ENCODE measurements at regions of chr22 and their contacts with region 1.

Region 1: DNA sequence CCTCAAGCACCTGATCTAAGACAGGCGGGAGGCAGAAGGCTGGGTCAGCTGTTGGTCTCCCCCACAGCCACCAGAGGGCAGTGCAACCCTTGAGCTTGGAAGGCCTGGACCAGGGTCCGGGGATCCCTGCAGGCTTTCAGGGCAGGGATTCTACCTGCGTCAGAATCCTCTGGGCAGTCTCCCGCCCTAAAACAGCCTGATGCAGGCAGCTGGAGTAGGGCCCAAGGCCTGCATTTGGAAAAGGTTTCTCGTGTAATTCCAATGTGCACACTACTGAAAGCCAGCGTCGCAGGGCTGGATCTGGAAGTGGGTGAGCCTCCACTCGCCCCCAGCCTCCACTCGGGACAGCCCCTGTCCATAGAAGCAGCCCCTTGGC is 31.8 kb downstream of the BID start:
- DNase-seq: peak; percentile 57 to 91 (median 77)
- H3K4me3 ChIP-seq: peak overlapping the region in 5 of 59 donors; percentile 1 to 43 (median 20)
- H3K27ac ChIP-seq: peak overlapping the region in 21 of 59 donors; percentile 25 to 79 (median 54)
- H3K27me3 ChIP-seq: no peaks in the 10 kb centered on the region
- CTCF ChIP-seq: peak; percentile 38 to 85 (median 76)

Region 2: GRCh38 chr22:17319546-17319945 is 423.0 kb before region 1 on chr22:
- intact Hi-C with region 1: no loop called
- DNase-seq: no peak
- H3K4me3 ChIP-seq: no peak overlapping the region
- H3K27ac ChIP-seq: no peak overlapping the region
- H3K27me3 ChIP-seq: peaks cover 0 to 10% (median 0%) of the 10 kb centered on the region in 45 donors
- CTCF ChIP-seq: no peak

Region 3: DNA sequence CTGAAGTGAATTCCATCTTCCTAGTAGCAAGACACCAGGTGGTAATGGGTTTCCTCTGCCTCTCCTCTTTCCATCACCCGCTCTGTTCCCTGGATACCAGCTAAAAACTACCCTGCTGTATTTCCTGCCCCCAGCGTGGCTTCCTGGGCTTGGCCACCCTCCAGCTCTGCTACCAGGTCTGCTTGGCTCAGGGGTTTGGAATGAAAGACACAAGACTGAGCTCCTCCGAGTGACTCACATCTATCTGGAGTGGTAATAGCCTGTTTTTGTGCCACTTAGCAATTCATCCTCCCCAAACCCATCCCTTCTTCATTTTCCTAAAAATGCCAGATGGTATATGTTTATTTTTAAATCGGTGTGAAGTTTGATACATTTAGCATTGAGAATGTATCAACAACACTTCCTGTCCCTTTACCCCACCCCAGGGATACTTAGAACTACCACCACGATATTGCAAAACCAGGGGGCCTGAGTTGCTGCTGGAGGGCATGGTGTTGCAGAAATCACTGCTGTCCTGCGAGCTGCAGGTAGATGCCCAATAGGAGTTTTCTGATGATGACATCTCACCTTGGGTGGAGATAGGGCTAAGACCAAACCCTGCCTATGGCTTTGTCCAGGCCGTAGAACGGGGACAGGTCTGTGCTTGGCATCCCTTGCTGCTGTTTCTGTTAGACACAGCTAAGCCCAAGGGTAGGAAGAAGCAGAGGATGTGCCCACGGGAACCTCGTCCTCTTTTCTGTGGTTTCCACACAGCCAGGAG is 289.4 kb after region 1 on chr22:
- intact Hi-C with region 1: loop called in 1 of 2 experiments (anchors 10 kb)
- DNase-seq: peak in 7 of 10 donors; percentile 18 to 78 (median 59)
- H3K4me3 ChIP-seq: no peak overlapping the region
- H3K27ac ChIP-seq: peak overlapping the region in 44 of 59 donors; percentile 1 to 81 (median 54)
- H3K27me3 ChIP-seq: no peaks in the 10 kb centered on the region
- CTCF ChIP-seq: no peak